Psoas muscle (tissue), 8 donors: ENCODE measurements at regions of chr1 and their contacts with region 1.

Region 1: GRCh38 chr1:243325305-243325890 is 69.6 kb downstream of the SDCCAG8 start:
- DNase-seq: no peak
- ATAC-seq: peak in 2 of 4 donors; percentile 59 to 73
- H3K4me3 ChIP-seq: no peak overlapping the region
- H3K27ac ChIP-seq: no peak overlapping the region
- H3K4me1 ChIP-seq: no peaks in the 10 kb centered on the region
- H3K27me3 ChIP-seq: no peaks in the 10 kb centered on the region
- CTCF ChIP-seq: peak; percentile 86

Region 2: DNA sequence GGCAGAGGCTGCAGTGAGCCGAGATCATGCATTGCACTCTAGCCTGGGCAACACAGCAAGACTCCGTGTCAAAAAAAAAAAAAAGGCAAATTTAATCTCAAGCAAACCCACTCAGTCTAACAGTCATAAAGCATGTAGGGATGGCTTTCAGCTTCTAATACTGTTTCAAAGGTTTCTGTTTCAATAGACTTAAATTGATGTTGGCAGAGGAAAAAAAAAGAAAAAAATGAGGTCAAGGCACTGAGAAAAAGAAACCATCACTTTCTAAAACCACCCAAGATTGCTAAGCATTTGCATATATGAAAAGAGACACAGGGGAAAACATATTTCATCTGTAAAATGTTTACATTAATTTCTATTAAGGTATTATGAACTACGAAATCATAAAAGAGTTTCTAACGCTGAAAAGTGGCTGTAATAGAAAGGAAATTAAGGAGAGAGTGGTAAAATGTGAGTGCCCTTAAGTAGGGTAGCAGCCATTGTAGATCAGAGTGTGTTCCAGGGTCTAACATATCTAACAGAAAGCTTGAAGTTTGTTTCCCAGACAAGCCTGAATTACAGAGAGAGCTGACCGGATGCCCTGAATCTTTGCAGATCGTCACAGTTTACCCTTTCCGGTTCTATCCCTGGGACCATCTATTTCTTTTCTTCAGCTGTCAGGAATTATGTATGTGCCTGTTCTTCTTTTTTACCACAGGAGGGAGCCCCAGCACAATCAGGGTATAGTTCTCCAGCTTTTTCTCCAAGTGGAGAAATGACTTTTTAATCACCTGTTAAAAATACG is 870.9 kb before region 1 on chr1:
- intact Hi-C with region 1: loop called in 1 of 2 experiments (anchors 10 kb)
- DNase-seq: no peak
- ATAC-seq: no peak
- H3K4me3 ChIP-seq: no peak overlapping the region
- H3K27ac ChIP-seq: no peak overlapping the region
- H3K4me1 ChIP-seq: no peaks in the 10 kb centered on the region
- H3K27me3 ChIP-seq: no peaks in the 10 kb centered on the region
- CTCF ChIP-seq: peak; percentile 48

Region 3: DNA sequence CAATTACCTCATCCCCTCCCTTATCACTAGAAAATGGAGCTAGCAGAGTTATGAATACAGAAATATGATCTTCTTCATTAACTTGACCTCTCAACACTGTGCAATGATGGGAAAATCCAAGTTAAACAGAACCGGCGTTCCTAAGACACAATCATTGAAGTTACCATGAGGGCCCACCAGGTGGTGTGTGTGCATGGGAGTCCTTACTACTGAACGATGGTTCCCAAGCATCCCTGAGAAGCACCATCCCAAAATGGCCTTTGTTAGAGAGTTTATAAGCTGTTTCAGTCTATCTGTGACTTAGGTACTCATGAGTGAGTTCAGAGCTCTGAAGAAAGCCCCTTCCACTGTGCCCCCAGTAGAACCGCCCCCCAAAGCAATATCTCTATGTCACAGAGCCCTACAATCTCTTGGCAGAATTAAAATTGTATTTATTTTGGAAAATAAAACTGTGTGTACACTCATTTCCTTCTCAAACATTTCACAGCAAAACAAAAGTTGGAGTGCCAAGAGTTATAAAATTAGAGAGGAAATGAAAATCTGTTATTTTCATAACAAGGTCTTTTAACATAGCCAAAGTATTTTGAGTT is 857.7 kb before region 1 on chr1:
- intact Hi-C with region 1: loop called in 1 of 2 experiments (anchors 5 kb)
- DNase-seq: no peak
- ATAC-seq: peak in 1 of 4 donors; percentile 35
- H3K4me3 ChIP-seq: no peak overlapping the region
- H3K27ac ChIP-seq: no peak overlapping the region
- H3K4me1 ChIP-seq: no peaks in the 10 kb centered on the region
- H3K27me3 ChIP-seq: no peaks in the 10 kb centered on the region
- CTCF ChIP-seq: peak; percentile 48

Region 4: DNA sequence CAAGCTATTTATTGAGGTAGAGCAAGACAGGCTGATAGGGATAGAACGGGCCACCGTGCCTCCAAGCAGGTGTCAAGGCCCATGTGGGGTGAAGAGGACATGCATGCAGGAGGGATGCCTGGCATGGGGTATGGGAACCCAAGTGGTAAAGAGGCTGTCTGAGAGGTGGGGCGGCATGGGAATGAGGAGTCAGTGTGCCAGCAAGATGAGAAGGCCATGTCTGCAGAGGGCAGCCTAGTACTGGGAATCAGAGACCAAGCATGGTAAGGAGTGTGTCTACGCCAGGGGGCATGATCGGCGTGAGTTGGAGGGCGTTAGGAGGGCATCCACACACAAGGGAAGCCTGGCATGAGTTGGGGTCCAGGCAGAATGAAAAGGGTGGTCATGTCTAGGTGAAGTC is 497.2 kb before region 1 on chr1:
- intact Hi-C with region 1: no loop called
- DNase-seq: no peak
- ATAC-seq: no peak
- H3K4me3 ChIP-seq: no peak overlapping the region
- H3K27ac ChIP-seq: no peak overlapping the region
- H3K4me1 ChIP-seq: no peaks in the 10 kb centered on the region
- H3K27me3 ChIP-seq: no peaks in the 10 kb centered on the region
- CTCF ChIP-seq: no peak

Region 5: DNA sequence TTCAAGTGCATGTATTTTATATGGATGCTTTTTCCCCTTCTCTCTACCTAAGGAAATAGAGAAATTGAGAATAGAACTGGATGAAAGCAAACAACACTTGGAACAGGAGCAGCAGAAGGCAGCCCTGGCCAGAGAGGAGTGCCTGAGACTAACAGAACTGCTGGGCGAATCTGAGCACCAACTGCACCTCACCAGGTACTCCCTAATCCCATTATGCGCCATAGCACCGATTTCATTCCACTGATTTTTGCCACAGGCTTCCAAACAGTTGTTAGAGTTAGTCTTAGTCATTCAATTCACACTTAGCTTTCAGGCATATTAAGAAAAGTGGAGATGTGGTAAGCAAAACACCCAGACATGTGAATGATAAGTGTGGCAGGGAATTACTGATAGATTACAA is 53.3 kb after region 1 on chr1:
- intact Hi-C with region 1: no loop called
- DNase-seq: no peak
- ATAC-seq: no peak
- H3K4me3 ChIP-seq: no peak overlapping the region
- H3K27ac ChIP-seq: no peak overlapping the region
- H3K4me1 ChIP-seq: peaks cover 4% of the 10 kb centered on the region
- H3K27me3 ChIP-seq: no peaks in the 10 kb centered on the region
- CTCF ChIP-seq: no peak